ENCODE measurements at regions of chr3 and their contacts with region 1.

Region 1: DNA sequence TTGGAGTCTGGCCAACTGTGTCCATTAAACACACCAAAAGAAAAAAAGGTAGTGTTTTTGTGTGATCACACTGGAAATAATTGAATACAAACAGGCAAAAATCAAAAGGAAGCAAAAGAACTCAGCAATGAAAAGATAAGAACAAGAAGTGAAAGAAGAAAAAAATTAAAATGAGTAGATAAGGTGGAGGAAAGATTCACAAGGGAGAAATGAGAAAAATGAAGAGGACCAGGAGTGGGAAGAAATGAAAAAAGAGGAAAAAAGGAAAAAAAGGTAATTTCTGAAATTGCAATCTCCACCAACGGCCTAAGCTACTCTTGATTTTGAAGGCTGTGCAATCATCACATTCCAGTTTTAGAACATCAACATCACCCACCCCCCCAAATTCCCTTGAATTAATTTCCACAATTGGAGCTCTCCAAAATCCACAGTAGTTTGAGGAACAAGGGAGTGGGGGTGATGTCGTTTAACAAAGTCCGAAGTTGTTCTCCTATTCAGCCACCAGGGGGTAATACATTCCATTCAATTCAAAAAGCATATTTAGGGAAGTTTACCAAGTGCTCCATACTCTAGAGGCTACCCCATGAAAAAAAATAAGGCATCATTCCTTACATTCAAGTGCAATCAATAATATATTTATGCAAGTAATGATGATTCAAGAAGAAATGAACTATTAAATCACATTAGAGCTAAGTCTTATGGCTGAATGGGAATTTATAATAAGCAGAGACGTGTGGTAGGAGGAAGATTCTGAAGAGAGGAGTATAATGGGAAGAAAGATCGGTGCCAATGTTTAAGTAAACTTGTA is 37.4 kb downstream of the ZNF860 start:
- DNase-seq: no peak
- H3K4me3 ChIP-seq: no peak overlapping the region
- H3K27ac ChIP-seq: no peak overlapping the region
- H3K4me1 ChIP-seq: peaks cover 0 to 11% (median 0%) of the 10 kb centered on the region in 6 donors
- H3K27me3 ChIP-seq: no peaks in the 10 kb centered on the region
- CTCF ChIP-seq: peak; percentile 41 to 78 (median 71)
- POLR2A ChIP-seq: no peak

Region 2: DNA sequence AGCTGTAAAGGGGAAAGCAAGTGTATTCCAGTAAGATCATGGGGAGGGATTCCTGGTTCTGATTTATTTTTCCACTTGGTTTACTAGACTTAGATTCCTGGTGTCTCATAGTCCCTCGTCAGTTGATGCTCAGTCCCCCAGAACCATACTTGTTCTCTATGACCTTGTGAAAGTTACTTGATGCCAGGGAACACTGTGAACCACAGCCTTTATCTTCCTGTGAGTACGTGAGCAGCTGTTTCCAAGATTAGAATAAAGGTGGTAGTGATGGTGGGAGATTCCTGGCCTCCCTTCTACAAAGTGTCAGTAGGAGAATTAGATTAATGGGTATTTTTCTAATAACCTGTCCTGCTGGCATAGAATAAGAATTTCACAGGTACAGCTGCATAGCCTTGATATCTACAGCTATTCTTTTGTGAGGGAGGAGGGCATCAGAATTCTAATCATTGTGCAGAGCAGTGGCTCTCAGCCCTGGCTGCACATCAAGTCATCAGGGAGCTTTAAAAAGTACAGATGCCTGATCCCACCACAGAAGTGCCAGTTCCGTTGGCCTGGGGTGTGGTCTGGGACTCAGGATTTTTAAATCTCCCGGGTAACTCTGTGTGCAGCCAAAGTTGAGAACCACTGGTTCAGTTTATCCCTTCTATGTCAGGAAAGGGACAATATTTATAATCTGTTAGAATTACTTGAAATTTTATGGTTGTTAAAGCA is 107.5 kb after region 1 on chr3:
- intact Hi-C with region 1: no loop called
- DNase-seq: no peak
- H3K4me3 ChIP-seq: no peak overlapping the region
- H3K27ac ChIP-seq: no peak overlapping the region
- H3K4me1 ChIP-seq: peaks cover 0 to 19% (median 0%) of the 10 kb centered on the region in 6 donors
- H3K27me3 ChIP-seq: no peaks in the 10 kb centered on the region
- CTCF ChIP-seq: no peak
- POLR2A ChIP-seq: no peak

Region 3: DNA sequence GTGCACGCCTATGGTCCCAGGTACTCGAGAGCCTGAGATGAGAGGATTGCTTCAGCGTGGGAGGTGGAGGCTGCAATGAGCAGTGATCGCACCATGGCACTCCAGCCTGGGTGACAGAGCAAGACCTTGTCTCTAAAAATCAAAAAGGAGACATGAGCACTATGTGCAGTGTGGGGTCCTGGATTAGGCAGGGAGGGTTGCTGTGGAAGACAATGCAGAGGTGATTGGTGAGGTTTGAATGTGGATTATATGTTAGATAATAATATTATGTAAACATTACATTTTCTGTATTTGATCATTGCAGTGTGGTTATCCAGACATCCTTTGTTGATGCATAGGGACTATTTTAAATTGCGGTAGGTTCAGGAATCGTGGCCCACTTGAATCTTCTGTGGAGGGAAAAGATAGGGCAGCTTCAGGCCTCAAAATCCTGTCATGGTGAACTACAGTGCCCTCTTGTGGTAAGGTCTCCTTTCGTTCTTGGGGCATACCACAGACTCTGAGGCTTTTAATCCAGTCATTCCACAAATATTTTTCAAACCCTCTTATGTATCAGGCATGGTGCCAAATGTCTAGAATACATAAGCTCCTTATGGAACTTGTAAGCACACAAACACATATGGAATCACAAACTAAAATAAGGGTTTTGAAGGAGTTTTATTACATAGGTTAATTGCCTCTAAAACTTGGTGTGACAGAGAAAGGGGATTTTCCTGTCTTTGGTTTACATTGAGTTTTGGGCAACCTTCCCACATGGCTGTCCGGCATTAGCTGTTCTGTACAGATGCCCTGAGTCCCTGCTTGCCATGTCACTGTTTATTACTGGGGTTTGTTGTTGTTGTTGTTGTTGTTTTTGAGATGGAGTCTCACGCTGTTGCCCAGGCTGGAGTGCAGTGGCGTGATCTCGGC is 125.1 kb after region 1 on chr3:
- intact Hi-C with region 1: loop called (anchors 2 kb)
- DNase-seq: no peak
- H3K4me3 ChIP-seq: no peak overlapping the region
- H3K27ac ChIP-seq: no peak overlapping the region
- H3K4me1 ChIP-seq: peaks cover 0 to 47% (median 11%) of the 10 kb centered on the region in 6 donors
- H3K27me3 ChIP-seq: no peaks in the 10 kb centered on the region
- CTCF ChIP-seq: peak; percentile 64 to 85 (median 80)
- POLR2A ChIP-seq: no peak

Region 4: DNA sequence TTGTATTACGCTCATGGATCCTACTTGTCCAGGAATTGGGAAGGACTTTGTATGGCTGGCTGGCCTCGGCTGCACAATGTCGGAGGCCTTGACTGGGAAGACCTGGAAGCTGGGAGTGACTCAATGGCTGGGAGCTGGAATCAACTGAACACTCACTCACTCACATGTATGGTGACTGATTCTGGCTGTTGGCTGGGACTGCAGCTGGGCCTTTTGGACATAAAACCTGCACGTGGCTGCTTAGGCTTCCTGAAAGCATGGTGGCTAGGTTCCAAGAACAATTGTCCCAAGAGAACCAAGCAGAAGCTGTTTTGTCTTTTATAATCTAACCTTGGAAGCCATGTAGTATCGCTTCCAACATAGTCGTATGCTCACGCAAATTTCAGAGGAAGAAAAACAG is 181.5 kb after region 1 on chr3:
- intact Hi-C with region 1: no loop called
- DNase-seq: no peak
- H3K4me3 ChIP-seq: no peak overlapping the region
- H3K27ac ChIP-seq: peak overlapping the region in 2 of 8 donors; percentile 20 to 27
- H3K4me1 ChIP-seq: no peaks in the 10 kb centered on the region
- H3K27me3 ChIP-seq: peaks cover 0 to 23% (median 0%) of the 10 kb centered on the region in 7 donors
- CTCF ChIP-seq: no peak
- POLR2A ChIP-seq: no peak

Region 5: DNA sequence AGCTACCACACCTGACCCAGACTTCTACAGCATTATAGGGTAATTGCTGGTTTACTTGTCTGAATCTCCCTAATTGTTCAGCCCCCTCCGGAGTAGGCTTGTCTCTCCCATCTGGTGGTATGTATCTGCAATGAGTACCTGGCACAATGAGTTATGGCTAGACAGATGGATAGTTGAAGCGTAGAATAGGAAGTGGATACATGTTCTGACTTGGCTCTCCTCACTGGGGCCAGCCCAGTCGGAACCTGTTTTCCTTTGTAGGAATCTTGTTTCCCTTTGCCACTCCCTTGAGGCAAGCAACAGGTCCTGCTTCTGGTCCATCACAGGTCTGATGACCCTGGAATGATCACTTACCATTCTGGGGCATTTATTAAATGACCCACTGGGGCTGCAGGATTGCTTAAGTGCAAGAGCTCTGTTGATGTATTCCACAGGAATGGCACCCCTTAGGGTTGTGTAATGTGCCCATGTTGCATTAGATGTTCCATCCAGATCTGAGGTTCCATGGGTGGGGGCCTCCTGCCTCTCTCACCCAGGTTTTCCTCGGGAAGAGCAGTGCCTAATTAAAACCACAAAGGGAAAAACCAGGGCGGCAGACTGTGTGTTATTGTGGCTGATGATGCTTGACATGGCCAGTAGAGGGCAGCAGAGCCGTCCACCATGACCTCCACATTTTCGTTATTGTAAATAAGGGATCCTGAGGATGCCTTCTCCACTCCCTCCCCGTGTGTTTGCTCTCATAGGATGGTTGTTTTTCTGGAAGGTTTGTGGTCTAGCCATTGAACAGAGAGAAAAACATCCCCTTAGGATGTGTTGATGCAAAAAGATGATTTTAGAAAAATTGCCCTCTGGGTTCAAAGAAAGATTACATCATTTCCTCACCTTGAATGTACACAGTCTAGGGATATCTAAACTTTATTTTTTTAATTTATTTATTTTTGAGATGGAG is 277.6 kb after region 1 on chr3:
- intact Hi-C with region 1: no loop called
- DNase-seq: peak; percentile 84
- H3K4me3 ChIP-seq: no peak overlapping the region
- H3K27ac ChIP-seq: peak overlapping the region in 3 of 8 donors; percentile 21 to 56 (median 38)
- H3K4me1 ChIP-seq: peaks cover 0 to 20% (median 9%) of the 10 kb centered on the region in 6 donors
- H3K27me3 ChIP-seq: no peaks in the 10 kb centered on the region
- CTCF ChIP-seq: peak; percentile 78 to 89 (median 86)
- POLR2A ChIP-seq: no peak

Measured in spleen (tissue), 13 donors.